CD8-positive, alpha-beta T cell (primary cell): ENCODE measurements at regions of chr16 and their contacts with region 1.

Region 1: GRCh38 chr16:22001591-22001990 is 675 bp upstream of the PDZD9 start:
- DNase-seq: no peak
- ATAC-seq: no peak
- H3K4me3 ChIP-seq: no peak overlapping the region
- H3K4me3 Mint-ChIP-seq: no peak overlapping the region
- H3K27ac ChIP-seq: no peak overlapping the region
- H3K27ac Mint-ChIP-seq: no peak overlapping the region
- H3K4me1 ChIP-seq: peaks cover 11% of the 10 kb centered on the region
- H3K4me1 Mint-ChIP-seq: peaks cover 11% of the 10 kb centered on the region
- H3K27me3 ChIP-seq: no peaks in the 10 kb centered on the region
- H3K27me3 Mint-ChIP-seq: no peaks in the 10 kb centered on the region
- CTCF ChIP-seq: no peak

Region 2: DNA sequence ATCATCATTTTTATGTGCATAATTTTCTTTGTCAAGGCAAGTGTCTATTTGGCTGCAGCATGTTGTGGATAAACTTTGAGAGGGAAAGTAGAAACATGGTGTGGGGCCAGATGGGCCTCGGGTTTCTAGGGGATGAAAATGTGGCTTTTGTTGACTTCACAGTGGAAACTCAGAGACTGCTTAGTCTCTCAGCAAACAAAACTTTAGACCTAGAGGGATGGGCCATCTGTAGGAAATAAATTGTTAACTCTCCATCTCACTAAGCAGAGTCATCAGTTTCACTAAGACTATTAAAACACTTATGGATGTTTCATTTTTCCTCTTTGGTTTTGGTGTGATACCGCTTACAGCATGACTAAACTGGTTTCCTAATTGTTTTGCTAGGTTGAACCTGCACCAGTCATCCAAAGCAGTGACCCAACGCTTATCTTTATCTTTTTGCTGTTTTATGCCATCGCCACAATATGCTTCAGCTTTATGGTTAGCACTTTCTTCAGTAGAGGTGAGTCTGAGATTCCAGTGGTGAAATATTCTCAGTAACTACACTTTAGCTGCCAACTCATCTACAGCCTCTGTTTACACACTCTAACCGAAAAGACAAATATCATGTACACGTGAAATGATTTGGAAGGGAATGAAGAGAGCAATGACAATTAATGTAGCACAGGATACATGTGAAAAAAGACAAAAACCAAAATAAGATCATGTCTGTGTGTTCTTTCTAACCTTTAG is 662.9 kb before region 1 on chr16:
- CTCF ChIA-PET with region 1: no interaction called
- POLR2A ChIA-PET with region 1: no interaction called
- intact Hi-C with region 1: no loop called
- DNase-seq: no peak
- ATAC-seq: no peak
- H3K4me3 ChIP-seq: no peak overlapping the region
- H3K4me3 Mint-ChIP-seq: no peak overlapping the region
- H3K27ac ChIP-seq: no peak overlapping the region
- H3K27ac Mint-ChIP-seq: no peak overlapping the region
- H3K4me1 ChIP-seq: no peaks in the 10 kb centered on the region
- H3K4me1 Mint-ChIP-seq: no peaks in the 10 kb centered on the region
- H3K27me3 ChIP-seq: no peaks in the 10 kb centered on the region
- H3K27me3 Mint-ChIP-seq: peaks cover 25% of the 10 kb centered on the region
- CTCF ChIP-seq: no peak

Region 3: DNA sequence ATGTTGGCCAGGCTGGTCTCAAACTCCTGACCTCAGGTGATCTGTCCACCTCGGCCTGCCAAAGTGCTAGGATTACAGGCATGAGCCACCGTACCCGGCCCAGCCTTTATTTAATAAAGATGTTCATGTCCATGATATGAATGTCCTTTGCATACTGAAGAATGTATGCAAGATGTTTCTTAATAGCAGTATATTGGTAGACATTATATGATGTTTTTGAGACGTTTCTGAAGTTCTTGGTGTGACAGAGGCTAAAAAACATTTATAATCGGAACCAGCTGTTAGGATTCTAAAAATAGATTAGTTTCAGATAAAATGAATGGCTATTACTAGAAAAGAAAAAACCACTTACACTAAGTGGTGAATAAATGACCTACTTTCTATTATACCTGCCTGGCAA is 12.5 kb before region 1 on chr16:
- CTCF ChIA-PET with region 1: interaction called, 17 read pairs
- POLR2A ChIA-PET with region 1: no interaction called
- intact Hi-C with region 1: no loop called
- DNase-seq: no peak
- ATAC-seq: no peak
- H3K4me3 ChIP-seq: no peak overlapping the region
- H3K4me3 Mint-ChIP-seq: no peak overlapping the region
- H3K27ac ChIP-seq: no peak overlapping the region
- H3K27ac Mint-ChIP-seq: no peak overlapping the region
- H3K4me1 ChIP-seq: no peaks in the 10 kb centered on the region
- H3K4me1 Mint-ChIP-seq: peaks cover 8% of the 10 kb centered on the region
- H3K27me3 ChIP-seq: no peaks in the 10 kb centered on the region
- H3K27me3 Mint-ChIP-seq: no peaks in the 10 kb centered on the region
- CTCF ChIP-seq: no peak

Region 4: GRCh38 chr16:22070361-22071330 is 69.1 kb after region 1 on chr16:
- CTCF ChIA-PET with region 1: interaction called, 158 read pairs
- POLR2A ChIA-PET with region 1: interaction called, 3 read pairs
- intact Hi-C with region 1: no loop called
- DNase-seq: no peak
- ATAC-seq: no peak
- H3K4me3 ChIP-seq: no peak overlapping the region
- H3K4me3 Mint-ChIP-seq: no peak overlapping the region
- H3K27ac ChIP-seq: no peak overlapping the region
- H3K27ac Mint-ChIP-seq: no peak overlapping the region
- H3K4me1 ChIP-seq: no peaks in the 10 kb centered on the region
- H3K4me1 Mint-ChIP-seq: no peaks in the 10 kb centered on the region
- H3K27me3 ChIP-seq: no peaks in the 10 kb centered on the region
- H3K27me3 Mint-ChIP-seq: no peaks in the 10 kb centered on the region
- CTCF ChIP-seq: no peak

Region 5: GRCh38 chr16:22098405-22099255 is 97.0 kb after region 1 on chr16:
- CTCF ChIA-PET with region 1: interaction called, 6 read pairs
- POLR2A ChIA-PET with region 1: no interaction called
- intact Hi-C with region 1: loop called in 1 of 2 experiments (anchors 1 kb)
- DNase-seq: peak in 2 of 9 experiments; percentile 53 to 65
- ATAC-seq: peak; percentile 69
- H3K4me3 ChIP-seq: no peak overlapping the region
- H3K4me3 Mint-ChIP-seq: no peak overlapping the region
- H3K27ac ChIP-seq: no peak overlapping the region
- H3K27ac Mint-ChIP-seq: no peak overlapping the region
- H3K4me1 ChIP-seq: no peaks in the 10 kb centered on the region
- H3K4me1 Mint-ChIP-seq: peaks cover 2% of the 10 kb centered on the region
- H3K27me3 ChIP-seq: peaks cover 0 to 6% of the 10 kb centered on the region in 2 experiments
- H3K27me3 Mint-ChIP-seq: peaks cover 23% of the 10 kb centered on the region
- CTCF ChIP-seq: peak; percentile 44